Activated CD4-positive, alpha-beta memory T cell treated with anti-CD3 and anti-CD28 coated beads for 36 hours (primary cell): ENCODE measurements at regions of chr20 and their contacts with region 1.

Region 1: GRCh38 chr20:19661717-19662636 is 96.1 kb upstream of the RIN2 start:
- DNase-seq: peak; percentile 62
- H3K4me3 Mint-ChIP-seq: no peak overlapping the region
- H3K27ac Mint-ChIP-seq: no peak overlapping the region
- H3K4me1 Mint-ChIP-seq: no peaks in the 10 kb centered on the region
- H3K27me3 Mint-ChIP-seq: peaks cover 27% of the 10 kb centered on the region

Region 2: DNA sequence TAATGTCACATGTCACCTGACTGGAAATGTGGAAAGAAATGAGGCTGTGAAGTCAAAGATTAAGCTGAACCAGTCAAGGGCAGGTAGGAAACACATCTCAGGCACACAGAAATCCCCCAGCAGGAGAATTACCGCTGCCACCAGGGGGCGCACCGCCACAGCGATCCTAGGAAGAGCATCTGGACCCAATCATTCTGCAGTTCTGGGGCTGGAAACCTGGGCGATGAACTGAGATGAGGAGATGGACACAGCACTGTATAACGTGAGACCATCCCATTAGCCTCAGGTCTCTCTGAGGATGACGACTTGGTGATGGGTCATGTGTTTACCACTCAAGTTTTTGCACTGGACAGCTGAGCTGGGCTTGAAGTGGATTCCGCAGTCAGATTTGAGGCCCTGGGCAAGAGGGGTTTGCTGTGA is 456.0 kb before region 1 on chr20:
- CTCF ChIA-PET with region 1: interaction called, 35 read pairs
- POLR2A ChIA-PET with region 1: no interaction called
- intact Hi-C with region 1: loop called (anchors 1 kb)
- DNase-seq: peak; percentile 69
- H3K4me3 Mint-ChIP-seq: no peak overlapping the region
- H3K27ac Mint-ChIP-seq: no peak overlapping the region
- H3K4me1 Mint-ChIP-seq: no peaks in the 10 kb centered on the region
- H3K27me3 Mint-ChIP-seq: peaks cover 18% of the 10 kb centered on the region

Region 3: GRCh38 chr20:19603376-19603750 is 58.6 kb before region 1 on chr20:
- CTCF ChIA-PET with region 1: no interaction called
- POLR2A ChIA-PET with region 1: no interaction called
- intact Hi-C with region 1: no loop called
- DNase-seq: no peak
- H3K4me3 Mint-ChIP-seq: no peak overlapping the region
- H3K27ac Mint-ChIP-seq: no peak overlapping the region
- H3K4me1 Mint-ChIP-seq: no peaks in the 10 kb centered on the region
- H3K27me3 Mint-ChIP-seq: no peaks in the 10 kb centered on the region

Region 4: DNA sequence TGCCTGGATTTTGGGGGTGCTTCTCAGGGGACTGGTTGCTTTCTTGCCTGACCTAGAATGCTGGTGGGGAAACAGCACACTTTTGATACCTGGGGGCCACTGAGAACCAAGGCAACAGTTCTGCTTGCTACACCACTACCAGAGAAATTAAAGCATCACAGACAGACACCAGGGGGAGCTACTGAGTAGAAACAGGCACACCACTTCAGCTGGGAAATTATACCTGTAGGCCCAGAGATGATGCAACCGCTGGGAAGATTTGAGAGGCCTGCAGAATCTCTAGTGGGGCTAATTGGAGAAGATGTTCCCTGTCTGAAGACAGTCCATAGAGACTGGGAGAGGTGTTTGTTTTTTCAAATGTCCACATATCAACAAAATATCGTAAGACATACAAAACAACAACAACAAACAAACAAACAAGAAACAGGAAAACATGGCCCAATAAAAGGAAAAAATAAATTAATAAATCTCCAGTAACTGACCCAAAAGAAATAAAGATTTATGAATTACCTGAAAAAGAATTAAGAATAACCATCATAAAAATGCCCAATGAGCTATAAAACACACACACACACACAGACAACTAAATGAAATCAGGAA is 33.3 kb before region 1 on chr20:
- CTCF ChIA-PET with region 1: interaction called, 24 read pairs
- POLR2A ChIA-PET with region 1: no interaction called
- intact Hi-C with region 1: loop called (anchors 2 kb)
- DNase-seq: peak; percentile 45
- H3K4me3 Mint-ChIP-seq: no peak overlapping the region
- H3K27ac Mint-ChIP-seq: no peak overlapping the region
- H3K4me1 Mint-ChIP-seq: no peaks in the 10 kb centered on the region
- H3K27me3 Mint-ChIP-seq: peaks cover 2% of the 10 kb centered on the region